ENCODE measurements at regions of chr17 and their contacts with region 1.

Region 1: GRCh38 chr17:76063875-76064546 is 8.3 kb downstream of the SRP68 start:
- DNase-seq: no peak
- ATAC-seq: no peak
- H3K4me3 ChIP-seq: no peak overlapping the region
- H3K27ac ChIP-seq: no peak overlapping the region
- H3K4me1 ChIP-seq: no peaks in the 10 kb centered on the region
- H3K27me3 ChIP-seq: no peaks in the 10 kb centered on the region
- CTCF ChIP-seq: no peak

Region 2: GRCh38 chr17:76014184-76014924 is 49.7 kb before region 1 on chr17:
- CTCF ChIA-PET with region 1: interaction called, 10 read pairs
- POLR2A ChIA-PET with region 1: interaction called, 8 read pairs
- in situ Hi-C with region 1: no loop called
- intact Hi-C with region 1: no loop called
- DNase-seq: peak; percentile 32
- ATAC-seq: peak; percentile 91
- H3K4me3 ChIP-seq: no peak overlapping the region
- H3K27ac ChIP-seq: no peak overlapping the region
- H3K4me1 ChIP-seq: no peaks in the 10 kb centered on the region
- H3K27me3 ChIP-seq: no peaks in the 10 kb centered on the region
- CTCF ChIP-seq: peak; percentile 99